PC-9 (cell line): ENCODE measurements at regions of chr12 and their contacts with region 1.

Region 1: DNA sequence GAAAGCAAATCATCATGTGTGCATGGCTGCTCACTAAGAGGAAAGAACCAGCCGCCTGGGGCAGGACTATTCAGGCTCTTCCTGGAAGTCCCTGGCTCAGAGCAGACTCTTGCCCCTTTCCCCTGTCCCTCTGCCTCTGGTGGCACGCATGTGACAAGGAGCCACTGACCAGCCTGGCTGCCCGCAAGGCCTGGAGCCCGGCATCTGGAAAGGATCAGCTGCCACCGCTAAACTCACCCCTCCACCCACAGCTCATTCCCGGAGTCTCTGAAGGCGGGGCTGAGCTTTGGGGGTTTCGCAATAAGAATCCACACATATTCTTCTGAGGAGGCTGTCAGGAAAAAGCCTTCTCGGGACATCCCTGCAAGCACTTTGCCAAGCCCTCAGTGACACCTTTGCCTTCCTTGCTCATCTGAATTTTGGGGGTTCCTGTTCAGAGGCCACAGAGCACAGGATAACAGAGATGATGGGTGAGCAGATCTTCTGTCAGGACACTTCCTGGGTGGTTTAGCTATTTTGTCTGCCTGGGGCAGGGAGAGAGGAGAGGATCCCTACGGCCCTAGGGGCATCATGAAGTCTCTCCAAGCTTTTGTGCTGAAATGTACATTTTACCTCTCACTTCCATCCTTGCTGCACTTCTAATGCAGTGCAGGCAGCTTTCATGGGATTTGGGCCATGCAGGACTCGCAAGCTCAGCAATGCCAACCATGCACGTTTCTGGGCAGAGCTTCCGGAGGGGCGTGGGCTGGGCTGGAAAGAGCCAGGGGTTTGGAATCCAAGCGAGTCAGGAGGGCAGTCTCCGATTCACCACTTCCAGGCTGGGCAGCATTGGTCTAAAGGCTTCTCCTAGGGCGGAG is 124.8 kb upstream of the MAP1LC3B2 start:
- DNase-seq: peak; percentile 94
- H3K4me3 ChIP-seq: peak overlapping the region; percentile 42; the same call in 1 of the 2 replicates
- H3K27ac ChIP-seq: peak overlapping the region; percentile 80
- H3K4me1 ChIP-seq: peaks cover 24% of the 10 kb centered on the region
- H3K27me3 ChIP-seq: no peaks in the 10 kb centered on the region
- CTCF ChIP-seq: no peak

Region 2: GRCh38 chr12:116376354-116377193 is 57.8 kb before region 1 on chr12:
- CTCF ChIA-PET with region 1: no interaction called
- POLR2A ChIA-PET with region 1: no interaction called
- intact Hi-C with region 1: no loop called
- DNase-seq: peak in 1 of 2 experiments; percentile 84
- H3K4me3 ChIP-seq: peak overlapping the region; percentile 28; the same call in 1 of the 2 replicates
- H3K27ac ChIP-seq: peak overlapping the region; percentile 85
- H3K4me1 ChIP-seq: peaks cover 34% of the 10 kb centered on the region
- H3K27me3 ChIP-seq: no peaks in the 10 kb centered on the region
- CTCF ChIP-seq: no peak

Region 3: GRCh38 chr12:116448164-116448739 is 13.9 kb after region 1 on chr12:
- CTCF ChIA-PET with region 1: no interaction called
- POLR2A ChIA-PET with region 1: no interaction called
- intact Hi-C with region 1: no loop called
- DNase-seq: no peak
- H3K4me3 ChIP-seq: no peak overlapping the region
- H3K27ac ChIP-seq: no peak overlapping the region
- H3K4me1 ChIP-seq: peaks cover 4% of the 10 kb centered on the region; the same call in 1 of the 2 replicates
- H3K27me3 ChIP-seq: no peaks in the 10 kb centered on the region
- CTCF ChIP-seq: no peak

Region 4: DNA sequence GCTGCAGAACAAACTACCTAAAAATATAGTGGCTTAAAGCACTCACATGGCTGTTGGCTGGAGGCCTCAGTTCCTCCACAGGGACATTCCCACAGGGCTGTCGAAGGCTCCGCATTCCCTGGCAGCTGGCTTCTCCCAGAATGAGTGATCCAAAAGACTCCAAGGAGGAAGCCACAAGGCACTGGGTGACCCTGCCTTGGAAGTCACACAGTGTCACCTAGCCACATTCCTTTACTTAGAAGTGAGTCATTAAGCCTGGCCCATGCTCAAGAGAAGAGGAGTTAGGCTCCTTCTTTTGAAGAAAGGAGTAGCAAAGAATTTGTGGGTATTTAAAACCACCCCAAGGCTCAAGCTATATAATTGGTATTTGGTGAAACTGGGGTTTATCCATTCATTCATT is 60.9 kb after region 1 on chr12:
- CTCF ChIA-PET with region 1: no interaction called
- POLR2A ChIA-PET with region 1: no interaction called
- intact Hi-C with region 1: loop called (anchors 2 kb)
- DNase-seq: peak; percentile 78 to 99
- H3K4me3 ChIP-seq: no peak overlapping the region
- H3K27ac ChIP-seq: peak overlapping the region; percentile 95
- H3K4me1 ChIP-seq: peaks cover 61% of the 10 kb centered on the region
- H3K27me3 ChIP-seq: no peaks in the 10 kb centered on the region
- CTCF ChIP-seq: no peak

Region 5: GRCh38 chr12:116533343-116534251 is 99.2 kb after region 1 on chr12:
- CTCF ChIA-PET with region 1: interaction called, 12 read pairs
- POLR2A ChIA-PET with region 1: no interaction called
- intact Hi-C with region 1: no loop called
- DNase-seq: peak; percentile 51 to 76
- H3K4me3 ChIP-seq: peak overlapping the region; percentile 57
- H3K27ac ChIP-seq: no peak overlapping the region
- H3K4me1 ChIP-seq: peaks cover 18% of the 10 kb centered on the region
- H3K27me3 ChIP-seq: no peaks in the 10 kb centered on the region
- CTCF ChIP-seq: no peak

Region 6: DNA sequence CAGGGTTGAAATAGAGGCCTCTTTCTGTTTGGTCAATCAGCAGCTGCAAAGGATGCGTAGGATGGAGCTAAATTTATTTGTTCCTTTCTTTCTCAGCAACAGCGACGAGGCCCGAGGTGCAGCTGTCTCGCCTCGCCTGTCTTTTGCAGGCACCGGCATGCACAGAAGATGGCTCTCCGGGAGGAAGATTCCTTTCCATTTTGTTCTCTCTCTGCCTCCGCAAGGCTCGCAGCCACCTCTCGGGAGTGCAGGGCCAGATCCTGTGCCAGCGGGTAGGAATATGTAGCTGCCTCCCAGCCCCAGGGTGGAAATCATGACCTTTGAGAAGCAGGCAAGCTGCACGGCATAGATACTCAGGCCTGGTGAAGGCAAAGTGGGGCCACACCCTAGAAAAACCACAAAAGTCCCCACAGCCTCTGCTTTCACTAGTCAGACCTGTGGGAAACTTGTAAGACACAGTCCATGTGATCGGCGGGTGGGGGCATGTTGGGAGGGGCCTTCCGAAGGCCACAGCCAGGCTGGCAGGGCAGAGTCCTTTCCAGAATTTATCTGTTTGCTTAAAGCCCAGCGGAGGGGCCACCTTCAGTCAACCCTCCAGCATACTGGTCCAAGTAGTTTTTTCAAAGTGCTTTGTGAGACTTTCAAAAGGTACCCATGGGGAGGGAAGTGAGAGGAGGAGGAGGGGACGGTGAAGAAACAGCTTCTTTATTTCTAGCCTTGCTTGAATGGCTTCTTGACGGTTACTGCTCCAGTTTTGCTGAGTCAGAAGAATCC is 125.0 kb after region 1 on chr12 and contains the start of gene MAP1LC3B2:
- CTCF ChIA-PET with region 1: no interaction called
- POLR2A ChIA-PET with region 1: no interaction called
- intact Hi-C with region 1: loop called (anchors 1 kb)
- DNase-seq: peak; percentile 88 to 95
- H3K4me3 ChIP-seq: peak within 1 kb of the TSS; percentile 18; the same call in 1 of the 2 replicates
- H3K27ac ChIP-seq: peak within 1 kb of the TSS; percentile 87
- H3K4me1 ChIP-seq: peaks cover 23% of the 10 kb centered on the region
- H3K27me3 ChIP-seq: no peaks in the 10 kb centered on the region
- CTCF ChIP-seq: no peak
- total RNA-seq, gene MAP1LC3B2: 1.1 and 1.4 TPM in 2 replicates